GM10248 (cell line): ENCODE measurements at regions of chr1 and their contacts with region 1.

Region 1: GRCh38 chr1:153572569-153573015 is 6.9 kb upstream of the S100A2 start:
- DNase-seq: peak; percentile 69
- CTCF ChIP-seq: peak; percentile 78

Region 2: DNA sequence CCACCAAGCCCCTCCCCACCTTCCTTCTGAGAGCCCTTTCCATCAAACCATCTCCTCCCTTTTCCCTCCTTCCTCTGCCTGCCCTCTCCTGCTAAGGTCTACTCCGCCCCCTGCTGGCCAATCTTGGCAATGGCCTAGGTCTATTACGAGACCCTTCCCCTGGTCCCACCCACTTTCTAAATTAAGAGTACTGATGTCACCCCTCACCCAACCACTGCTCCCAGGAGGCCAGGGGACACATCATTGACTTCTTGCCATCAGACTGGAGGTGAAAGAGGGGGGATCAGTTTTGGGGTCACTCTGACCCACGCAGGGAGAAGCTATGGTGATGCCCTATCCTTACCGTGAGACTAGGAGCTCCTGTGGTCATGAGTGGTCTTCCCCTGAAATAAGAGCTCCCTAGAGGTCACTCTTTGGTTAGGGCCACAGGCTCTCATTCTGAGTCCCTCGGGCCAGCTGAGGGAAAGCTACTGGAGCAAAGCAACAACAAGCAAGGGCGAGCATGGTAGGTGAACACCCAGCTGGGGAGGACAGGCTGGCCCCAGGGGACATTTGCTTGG is 77.5 kb before region 1 on chr1:
- CTCF ChIA-PET with region 1: interaction called, 12 read pairs
- POLR2A ChIA-PET with region 1: no interaction called
- DNase-seq: peak; percentile 65
- CTCF ChIP-seq: peak; percentile 86

Region 3: GRCh38 chr1:153526132-153526543 is 46.5 kb before region 1 on chr1:
- CTCF ChIA-PET with region 1: interaction called, 126 read pairs
- POLR2A ChIA-PET with region 1: no interaction called
- DNase-seq: no peak
- CTCF ChIP-seq: no peak

Region 4: DNA sequence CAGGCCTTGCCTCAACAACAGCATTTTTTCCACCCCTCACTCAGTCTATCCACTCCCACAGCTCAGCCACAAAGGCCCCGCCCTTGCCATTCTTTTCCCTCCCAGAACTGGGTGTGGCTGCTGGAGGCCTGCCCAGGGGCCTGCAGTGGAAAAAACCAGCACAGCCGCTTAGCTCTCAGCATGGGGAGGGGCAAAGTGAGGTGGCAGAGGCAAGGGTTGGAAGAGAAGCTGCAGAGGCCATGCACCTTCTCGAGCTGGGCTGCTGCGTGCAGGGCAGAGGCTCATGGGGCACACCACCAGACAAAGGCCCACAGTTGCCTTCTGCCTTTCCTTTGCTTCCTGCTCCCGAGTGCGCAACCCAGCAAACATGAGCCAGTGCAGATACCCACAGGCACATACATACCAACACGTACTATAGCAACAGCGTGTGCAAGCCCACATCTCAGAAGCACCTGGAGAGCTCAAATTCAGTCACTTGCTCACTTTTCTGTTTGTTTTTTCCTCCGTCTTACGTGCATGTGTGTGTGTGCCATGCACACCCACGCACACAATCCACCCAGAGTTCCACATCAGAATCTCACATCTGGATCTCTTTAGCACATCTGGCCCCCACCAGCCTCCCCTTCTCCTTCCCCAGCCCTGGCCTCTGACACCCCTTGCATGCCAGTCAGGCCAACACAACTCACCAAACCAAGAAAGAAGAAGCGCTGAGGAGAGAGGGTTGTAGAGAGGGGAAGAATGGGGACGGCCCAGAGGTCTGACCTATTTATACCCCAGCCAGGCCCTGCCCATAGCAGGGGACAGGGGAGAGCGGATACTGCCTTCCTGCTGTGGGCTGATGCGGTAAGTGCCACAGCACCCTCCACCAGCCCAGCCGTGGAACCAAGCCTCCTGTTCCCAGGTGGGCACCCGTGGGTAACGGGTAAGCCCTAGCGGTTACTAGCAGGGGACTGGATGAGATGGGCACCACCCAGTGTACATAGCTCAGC is 27.2 kb before region 1 on chr1 and contains the start of gene S100A4:
- CTCF ChIA-PET with region 1: interaction called, 25 read pairs
- POLR2A ChIA-PET with region 1: no interaction called
- DNase-seq: peak; percentile 79
- CTCF ChIP-seq: no peak

Region 5: GRCh38 chr1:153583976-153584375 is 11.4 kb after region 1 on chr1:
- CTCF ChIA-PET with region 1: interaction called, 15 read pairs
- POLR2A ChIA-PET with region 1: no interaction called
- DNase-seq: no peak
- CTCF ChIP-seq: no peak

Region 6: GRCh38 chr1:153617675-153618074 is 45.1 kb after region 1 on chr1:
- CTCF ChIA-PET with region 1: interaction called, 136 read pairs
- POLR2A ChIA-PET with region 1: no interaction called
- DNase-seq: peak; percentile 34
- CTCF ChIP-seq: peak; percentile 83